Activated T-helper 2 cell treated with anti-CD3 and anti-CD28 coated beads, Interferon-gamma antibody, Interleukin-2, Interleukin-4, amounts not matched to agents 10 μg/mL and 5 μg/mL and 100 μg/mL, durations not matched to agents 14 hours and 24 hours and 36 hours (primary cell): ENCODE measurements at regions of chr6 and their contacts with region 1.

Region 1: DNA sequence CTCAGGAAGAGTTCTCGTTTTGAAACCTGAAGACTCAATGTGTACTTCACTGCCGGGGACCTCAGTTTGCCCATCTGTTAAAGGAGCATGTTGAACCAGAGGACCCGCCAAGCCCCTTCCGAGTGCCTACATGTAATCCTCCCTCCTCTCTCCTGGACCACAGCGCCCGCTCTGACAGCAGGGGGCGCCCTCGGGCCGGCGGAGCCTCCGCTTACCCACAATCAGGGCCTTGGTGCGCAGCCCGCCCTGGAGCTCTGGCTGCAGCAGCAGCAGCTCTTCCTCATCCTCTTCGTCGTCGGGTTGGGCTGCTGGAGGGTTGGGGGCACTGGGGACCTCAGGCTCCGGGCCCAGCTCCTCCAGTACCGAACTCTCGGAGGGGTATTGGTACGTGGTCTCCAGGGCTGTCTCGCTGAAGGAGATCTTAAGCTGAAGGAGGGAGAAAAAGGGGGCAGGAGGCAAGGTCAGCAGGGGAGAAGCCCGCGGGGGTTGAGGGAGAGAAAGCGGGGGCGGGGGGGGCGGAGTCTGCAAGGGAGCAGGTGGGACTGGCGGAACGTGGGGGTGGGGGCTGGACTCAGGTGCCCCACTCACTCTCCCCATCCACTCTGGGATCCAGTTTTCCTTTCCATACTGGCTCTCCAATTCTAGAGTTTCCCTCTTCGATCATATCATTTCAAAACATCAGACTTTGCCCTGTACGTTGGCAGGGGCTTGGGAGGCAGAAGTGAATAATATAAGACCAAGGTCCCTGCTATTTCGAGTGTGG is 6.3 kb upstream of the DHX16 start:
- DNase-seq: peak; percentile 86
- H3K4me3 Mint-ChIP-seq: peak overlapping the region; percentile 97
- H3K27ac Mint-ChIP-seq: peak overlapping the region; percentile 75
- H3K4me1 Mint-ChIP-seq: peaks cover 26% of the 10 kb centered on the region
- H3K27me3 Mint-ChIP-seq: no peaks in the 10 kb centered on the region

Region 2: DNA sequence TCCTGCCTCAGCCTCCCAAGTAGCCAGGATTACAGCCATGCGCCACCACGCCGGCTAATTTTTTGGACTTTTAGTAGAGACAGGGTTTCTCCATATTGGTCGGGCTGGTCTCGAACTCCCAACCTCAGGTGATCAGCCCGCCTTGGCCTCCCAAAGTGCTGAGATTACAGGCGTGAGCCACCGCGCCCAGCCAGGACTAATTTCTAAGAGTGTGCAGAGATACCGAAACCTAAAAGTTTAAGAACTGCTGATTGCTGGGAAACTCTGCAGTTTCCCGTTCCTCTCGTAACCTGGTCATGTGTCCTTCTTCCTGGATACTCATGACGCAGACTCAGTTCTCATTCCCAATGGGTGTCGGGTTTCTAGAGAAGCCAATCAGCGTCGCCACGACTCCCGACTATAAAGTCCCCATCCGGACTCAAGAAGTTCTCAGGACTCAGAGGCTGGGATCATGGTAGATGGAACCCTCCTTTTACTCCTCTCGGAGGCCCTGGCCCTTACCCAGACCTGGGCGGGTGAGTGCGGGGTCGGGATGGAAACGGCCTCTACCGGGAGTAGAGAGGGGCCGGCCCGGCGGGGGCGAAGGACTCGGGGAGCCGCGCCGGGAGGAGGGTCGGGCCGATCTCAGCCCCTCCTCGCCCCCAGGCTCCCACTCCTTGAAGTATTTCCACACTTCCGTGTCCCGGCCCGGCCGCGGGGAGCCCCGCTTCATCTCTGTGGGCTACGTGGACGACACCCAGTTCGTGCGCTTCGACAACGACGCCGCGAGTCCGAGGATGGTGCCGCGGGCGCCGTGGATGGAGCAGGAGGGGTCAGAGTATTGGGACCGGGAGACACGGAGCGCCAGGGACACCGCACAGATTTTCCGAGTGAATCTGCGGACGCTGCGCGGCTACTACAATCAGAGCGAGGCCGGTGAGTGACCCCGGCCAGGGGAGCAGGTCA is 189.8 kb before region 1 on chr6 and contains the start of gene HLA-E:
- intact Hi-C with region 1: loop called (anchors 5 kb)
- DNase-seq: peak; percentile 90
- H3K4me3 Mint-ChIP-seq: peak within 1 kb of the TSS; percentile 98
- H3K27ac Mint-ChIP-seq: peak within 1 kb of the TSS; percentile 97
- H3K4me1 Mint-ChIP-seq: peaks cover 51% of the 10 kb centered on the region
- H3K27me3 Mint-ChIP-seq: no peaks in the 10 kb centered on the region
- total RNA-seq, gene HLA-E: 358 and 360 TPM in 2 replicates

Region 3: GRCh38 chr6:30570740-30571074 is 108.4 kb before region 1 on chr6:
- intact Hi-C with region 1: no loop called
- DNase-seq: no peak
- H3K4me3 Mint-ChIP-seq: peak overlapping the region; percentile 91
- H3K27ac Mint-ChIP-seq: peak overlapping the region; percentile 92
- H3K4me1 Mint-ChIP-seq: peaks cover 57% of the 10 kb centered on the region
- H3K27me3 Mint-ChIP-seq: no peaks in the 10 kb centered on the region

Region 4: GRCh38 chr6:30735668-30736314 is 56.6 kb after region 1 on chr6:
- intact Hi-C with region 1: loop called (anchors 5 kb)
- DNase-seq: no peak
- H3K4me3 Mint-ChIP-seq: peak overlapping the region; percentile 83
- H3K27ac Mint-ChIP-seq: peak overlapping the region; percentile 97
- H3K4me1 Mint-ChIP-seq: peaks cover 71% of the 10 kb centered on the region
- H3K27me3 Mint-ChIP-seq: no peaks in the 10 kb centered on the region

Region 5: GRCh38 chr6:30787954-30788353 is 108.8 kb after region 1 on chr6:
- intact Hi-C with region 1: loop called (anchors 5 kb)
- DNase-seq: peak; percentile 31
- H3K4me3 Mint-ChIP-seq: peak overlapping the region; percentile 66
- H3K27ac Mint-ChIP-seq: peak overlapping the region; percentile 96
- H3K4me1 Mint-ChIP-seq: peaks cover 57% of the 10 kb centered on the region
- H3K27me3 Mint-ChIP-seq: no peaks in the 10 kb centered on the region

Region 6: DNA sequence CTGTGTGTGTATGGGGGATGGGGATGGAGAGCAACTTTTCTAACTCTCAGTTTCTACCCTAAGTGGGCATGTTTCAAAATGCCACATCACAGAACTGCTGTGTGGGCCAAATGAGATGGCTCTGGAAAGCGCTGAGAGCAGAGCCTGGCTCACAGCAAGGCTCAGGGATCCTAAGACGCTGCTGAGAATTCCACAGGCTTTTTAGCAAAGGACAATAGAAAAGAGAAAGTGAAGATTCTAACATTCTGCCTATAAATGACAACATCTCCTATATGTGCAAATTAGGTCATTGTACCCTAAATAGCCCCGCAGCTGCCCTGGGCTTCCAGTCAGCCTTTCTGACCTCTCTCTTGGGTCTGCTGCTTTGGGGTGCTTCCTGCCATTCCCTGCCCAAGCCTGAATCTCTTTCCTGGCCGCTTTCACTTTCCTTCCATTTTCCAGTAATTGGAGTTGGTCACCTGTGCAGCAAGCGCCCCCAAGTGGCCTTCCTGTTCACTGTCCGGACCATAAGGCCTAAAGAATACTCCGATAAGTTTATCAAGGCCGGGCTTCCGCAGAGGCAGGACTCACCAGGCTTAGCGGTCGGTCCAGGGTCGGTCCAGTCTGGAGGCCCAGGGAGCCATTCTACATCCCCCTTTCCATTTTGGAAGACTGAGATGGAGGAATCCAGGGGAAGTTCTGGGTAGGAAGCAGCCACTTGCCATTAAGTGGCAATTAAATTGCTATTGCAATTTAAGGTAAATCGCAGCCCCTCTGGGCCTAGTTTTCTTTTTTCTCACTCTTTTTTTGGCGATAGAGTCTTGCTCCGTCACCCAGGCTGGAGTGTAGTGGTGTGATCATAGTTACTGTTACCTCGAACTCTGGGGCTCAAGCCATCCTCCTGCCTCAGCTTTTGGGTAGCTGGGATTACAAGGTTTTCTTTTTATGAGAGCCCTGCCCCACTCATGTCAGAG is 198.6 kb after region 1 on chr6:
- intact Hi-C with region 1: loop called (anchors 5 kb)
- DNase-seq: peak; percentile 64
- H3K4me3 Mint-ChIP-seq: peak overlapping the region; percentile 60
- H3K27ac Mint-ChIP-seq: peak overlapping the region; percentile 85
- H3K4me1 Mint-ChIP-seq: peaks cover 19% of the 10 kb centered on the region
- H3K27me3 Mint-ChIP-seq: no peaks in the 10 kb centered on the region